MCF 10A (cell line): ENCODE measurements at regions of chr5 and their contacts with region 1.

Region 1: GRCh38 chr5:36695677-36696673 is 89.6 kb downstream of the SLC1A3 start:
- DNase-seq: peak; percentile 80
- H3K4me3 Mint-ChIP-seq: no peak overlapping the region
- H3K27ac Mint-ChIP-seq: no peak overlapping the region
- H3K4me1 Mint-ChIP-seq: peaks cover 6% of the 10 kb centered on the region
- H3K27me3 Mint-ChIP-seq: peaks cover 7% of the 10 kb centered on the region
- CTCF ChIP-seq: peak; percentile 83

Region 2: GRCh38 chr5:36079200-36079761 is 616.7 kb before region 1 on chr5:
- CTCF ChIA-PET with region 1: interaction called, 12 read pairs
- POLR2A ChIA-PET with region 1: no interaction called
- intact Hi-C with region 1: loop called (anchors 5 kb)
- DNase-seq: peak; percentile 65
- H3K4me3 Mint-ChIP-seq: no peak overlapping the region
- H3K27ac Mint-ChIP-seq: no peak overlapping the region
- H3K4me1 Mint-ChIP-seq: no peaks in the 10 kb centered on the region
- H3K27me3 Mint-ChIP-seq: peaks cover 29% of the 10 kb centered on the region
- CTCF ChIP-seq: peak; percentile 56

Region 3: DNA sequence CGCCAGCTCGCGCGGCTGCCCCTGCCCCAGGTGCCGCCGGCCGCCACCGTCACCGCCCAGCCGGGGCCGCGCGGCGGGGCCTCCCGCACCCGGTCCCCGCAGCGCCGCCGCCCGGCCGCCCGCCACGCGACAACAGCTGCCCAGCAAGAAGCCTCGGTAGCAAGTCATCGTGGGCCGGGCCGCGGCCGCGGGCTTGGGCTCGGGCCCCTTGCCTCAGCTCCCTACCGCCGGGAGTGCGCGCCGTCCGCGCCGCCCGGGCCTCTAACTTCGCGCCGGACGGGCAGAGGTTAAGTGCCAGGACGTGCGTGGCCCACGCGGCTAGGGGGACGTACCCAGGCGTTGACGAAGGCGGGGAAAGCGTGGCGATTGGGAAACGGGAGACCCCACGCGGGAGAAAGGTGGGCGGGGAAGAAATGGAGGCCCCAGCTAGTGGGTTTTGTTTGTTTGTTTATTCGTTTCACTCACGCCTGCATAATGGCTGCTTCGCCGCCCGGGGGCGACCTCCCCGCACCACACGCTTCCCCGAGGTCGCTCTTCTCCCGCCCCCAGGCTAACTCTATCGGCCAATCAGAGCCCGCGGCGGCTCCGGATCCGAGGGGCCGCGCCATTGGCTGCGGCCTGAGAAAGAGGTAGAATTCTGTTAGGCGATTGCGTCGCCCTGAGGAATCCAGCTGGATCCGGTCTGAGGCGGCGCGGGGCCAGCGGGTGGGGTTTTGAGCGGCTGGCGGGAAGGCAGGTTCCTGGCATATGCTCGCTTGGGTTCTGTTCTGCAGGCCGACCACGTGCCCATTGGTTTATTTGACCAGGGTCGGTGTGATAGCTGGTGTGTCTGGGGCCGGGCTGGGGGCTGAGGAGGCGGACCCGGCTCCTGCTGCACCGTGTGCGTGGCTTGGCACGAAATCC is 454.1 kb before region 1 on chr5 and contains the start of gene NADK2:
- CTCF ChIA-PET with region 1: interaction called, 17 read pairs
- POLR2A ChIA-PET with region 1: interaction called, 4 read pairs
- intact Hi-C with region 1: no loop called
- DNase-seq: peak; percentile 97
- H3K4me3 Mint-ChIP-seq: peak within 1 kb of the TSS; percentile 86
- H3K27ac Mint-ChIP-seq: peak within 1 kb of the TSS; percentile 98
- H3K4me1 Mint-ChIP-seq: peaks cover 35% of the 10 kb centered on the region
- H3K27me3 Mint-ChIP-seq: no peaks in the 10 kb centered on the region
- CTCF ChIP-seq: peak; percentile 55
- total RNA-seq, gene NADK2: 36.2 and 37.1 TPM in 2 replicates

Region 4: DNA sequence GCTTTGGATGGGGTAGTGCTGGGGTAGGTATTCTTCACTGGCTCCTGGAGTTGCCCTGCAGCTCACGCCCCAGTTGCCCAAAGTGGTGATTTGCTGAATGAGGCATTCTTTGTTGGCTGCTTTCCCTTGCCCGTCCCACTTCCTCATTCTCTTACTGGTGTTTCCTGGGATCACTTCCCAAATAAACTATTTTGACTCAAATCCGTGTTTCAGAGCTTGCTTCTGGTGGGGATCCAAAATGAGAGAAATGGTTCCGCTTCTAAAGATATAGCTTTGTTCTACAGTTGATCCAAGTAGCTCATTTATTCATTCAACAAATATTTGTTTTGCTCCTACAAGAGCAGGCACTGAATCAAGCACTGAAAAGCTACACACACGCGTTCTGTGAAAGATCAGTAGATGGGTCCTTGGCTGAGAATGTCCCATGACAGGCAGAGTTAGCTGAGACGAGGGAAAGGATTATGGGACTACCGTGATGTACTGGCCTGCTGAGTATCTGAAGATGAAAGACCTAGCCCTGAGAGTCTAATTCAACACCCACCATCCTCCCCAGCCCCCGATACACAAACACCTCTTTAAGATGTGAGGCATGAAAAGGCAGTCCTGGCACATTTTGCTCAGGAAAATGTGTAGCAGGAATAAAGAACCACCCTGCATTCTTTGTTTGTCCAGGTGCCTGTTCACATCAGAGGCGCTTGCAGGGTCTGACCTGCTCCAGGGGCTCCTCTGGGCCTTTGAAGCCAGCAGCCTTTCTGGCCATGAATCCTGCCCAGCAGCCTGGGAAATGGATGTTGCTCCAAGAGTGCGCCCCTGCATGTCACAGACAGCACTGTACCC is 251.2 kb before region 1 on chr5:
- CTCF ChIA-PET with region 1: interaction called, 15 read pairs
- POLR2A ChIA-PET with region 1: interaction called, 5 read pairs
- intact Hi-C with region 1: no loop called
- DNase-seq: peak; percentile 73
- H3K4me3 Mint-ChIP-seq: peak overlapping the region; percentile 37
- H3K27ac Mint-ChIP-seq: peak overlapping the region; percentile 84
- H3K4me1 Mint-ChIP-seq: peaks cover 38% of the 10 kb centered on the region
- H3K27me3 Mint-ChIP-seq: no peaks in the 10 kb centered on the region
- CTCF ChIP-seq: no peak

Region 5: GRCh38 chr5:36494756-36495601 is 201.0 kb before region 1 on chr5:
- CTCF ChIA-PET with region 1: interaction called, 12 read pairs
- POLR2A ChIA-PET with region 1: interaction called, 3 read pairs
- intact Hi-C with region 1: no loop called
- DNase-seq: peak; percentile 42
- H3K4me3 Mint-ChIP-seq: no peak overlapping the region
- H3K27ac Mint-ChIP-seq: no peak overlapping the region
- H3K4me1 Mint-ChIP-seq: peaks cover 25% of the 10 kb centered on the region
- H3K27me3 Mint-ChIP-seq: no peaks in the 10 kb centered on the region
- CTCF ChIP-seq: no peak

Region 6: DNA sequence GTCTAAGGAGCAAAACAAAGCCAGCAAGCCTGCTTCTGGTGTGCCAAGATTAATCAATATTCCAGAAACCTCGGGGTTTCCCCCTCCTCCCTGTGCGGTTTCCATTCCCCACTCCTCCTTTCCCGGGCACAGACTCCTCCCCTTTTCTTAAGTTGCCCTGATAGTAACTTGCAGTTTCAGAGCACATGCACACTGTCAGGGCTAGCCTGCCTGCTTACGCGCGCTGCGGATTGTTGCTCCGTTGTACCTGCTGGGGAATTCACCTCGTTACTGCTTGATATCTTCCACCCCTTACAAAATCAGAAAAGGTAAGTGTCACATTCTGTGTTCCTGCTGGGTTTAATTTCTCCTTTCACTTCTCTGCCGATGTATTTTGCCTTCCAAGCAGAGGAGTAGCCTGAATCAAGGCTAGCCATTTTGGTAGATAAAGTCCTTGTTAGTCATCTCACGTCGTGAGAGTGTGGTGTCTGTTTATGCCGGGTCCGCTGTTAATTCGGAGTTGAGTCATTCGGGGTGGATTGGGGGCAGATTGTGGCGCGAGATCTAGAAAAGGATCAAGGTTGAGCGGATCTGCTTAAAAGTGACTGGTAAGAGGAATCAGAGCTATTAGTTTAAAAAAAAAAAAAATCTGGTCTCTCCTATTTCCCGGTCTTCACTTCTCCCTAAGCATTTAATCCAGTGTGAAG is 89.4 kb before region 1 on chr5 and contains the start of gene SLC1A3:
- CTCF ChIA-PET with region 1: interaction called, 12 read pairs
- POLR2A ChIA-PET with region 1: interaction called, 35 read pairs
- intact Hi-C with region 1: no loop called
- DNase-seq: peak; percentile 84
- H3K4me3 Mint-ChIP-seq: peak within 1 kb of the TSS; percentile 88
- H3K27ac Mint-ChIP-seq: peak within 1 kb of the TSS; percentile 84
- H3K4me1 Mint-ChIP-seq: peaks cover 9% of the 10 kb centered on the region
- H3K27me3 Mint-ChIP-seq: no peaks in the 10 kb centered on the region
- CTCF ChIP-seq: no peak
- total RNA-seq, gene SLC1A3: 5.9 and 9.6 TPM in 2 replicates

Region 7: DNA sequence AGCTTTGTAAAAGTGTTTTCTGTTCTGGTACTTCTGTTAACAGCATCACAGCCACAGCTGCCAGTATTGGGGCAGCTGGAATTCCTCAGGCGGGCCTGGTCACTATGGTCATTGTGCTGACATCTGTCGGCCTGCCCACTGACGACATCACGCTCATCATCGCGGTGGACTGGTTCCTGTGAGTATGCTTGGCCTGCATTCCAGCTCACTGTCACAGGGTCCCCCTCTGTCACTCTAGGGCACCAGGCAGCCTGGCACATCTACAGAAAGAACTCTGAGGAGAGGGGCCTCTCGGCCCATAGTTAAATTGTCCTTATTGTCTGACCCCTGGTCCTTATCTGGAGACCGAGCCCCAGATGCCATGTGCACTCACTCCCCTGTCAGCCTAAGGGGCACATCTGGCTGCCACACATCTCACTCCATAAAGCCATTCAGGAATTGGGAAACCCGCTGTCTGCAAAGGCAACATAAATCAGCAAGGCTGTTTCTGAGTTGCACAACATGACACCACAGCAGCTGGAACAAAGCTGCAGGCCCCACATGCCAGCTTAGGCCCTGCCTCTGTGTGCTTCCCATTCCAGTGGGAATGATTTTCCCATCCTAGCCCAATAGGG is 12.0 kb before region 1 on chr5:
- CTCF ChIA-PET with region 1: interaction called, 15 read pairs
- POLR2A ChIA-PET with region 1: no interaction called
- intact Hi-C with region 1: no loop called
- DNase-seq: peak; percentile 48
- H3K4me3 Mint-ChIP-seq: no peak overlapping the region
- H3K27ac Mint-ChIP-seq: no peak overlapping the region
- H3K4me1 Mint-ChIP-seq: no peaks in the 10 kb centered on the region
- H3K27me3 Mint-ChIP-seq: no peaks in the 10 kb centered on the region
- CTCF ChIP-seq: no peak